Activated B cell treated with CpG ODN at 0.5 μM for 24 hours (primary cell): ENCODE measurements at regions of chr19 and their contacts with region 1.

Region 1: GRCh38 chr19:6767357-6768235 is at the start of gene SH2D3A:
- DNase-seq: peak; percentile 87
- ATAC-seq: peak; percentile 73
- H3K4me3 Mint-ChIP-seq: peak within 1 kb of the TSS; percentile 88
- H3K27ac Mint-ChIP-seq: peak within 1 kb of the TSS; percentile 85
- H3K4me1 Mint-ChIP-seq: peaks cover 46% of the 10 kb centered on the region
- H3K27me3 Mint-ChIP-seq: no peaks in the 10 kb centered on the region
- CTCF ChIP-seq: no peak
- total RNA-seq, gene SH2D3A: 18.7 and 22.6 TPM in 2 replicates

Region 2: GRCh38 chr19:4859697-4860096 is 1907.9 kb before region 1 on chr19:
- CTCF ChIA-PET with region 1: no interaction called
- POLR2A ChIA-PET with region 1: interaction called, 11 read pairs
- intact Hi-C with region 1: no loop called
- DNase-seq: no peak
- ATAC-seq: no peak
- H3K4me3 Mint-ChIP-seq: no peak overlapping the region
- H3K27ac Mint-ChIP-seq: no peak overlapping the region
- H3K4me1 Mint-ChIP-seq: peaks cover 18% of the 10 kb centered on the region
- H3K27me3 Mint-ChIP-seq: no peaks in the 10 kb centered on the region
- CTCF ChIP-seq: no peak

Region 3: GRCh38 chr19:6577476-6578125 is 190.0 kb before region 1 on chr19:
- CTCF ChIA-PET with region 1: no interaction called
- POLR2A ChIA-PET with region 1: interaction called, 10 read pairs
- intact Hi-C with region 1: loop called (anchors 5 kb)
- DNase-seq: peak; percentile 54
- ATAC-seq: peak; percentile 90
- H3K4me3 Mint-ChIP-seq: peak overlapping the region; percentile 68
- H3K27ac Mint-ChIP-seq: no peak overlapping the region
- H3K4me1 Mint-ChIP-seq: peaks cover 6% of the 10 kb centered on the region
- H3K27me3 Mint-ChIP-seq: no peaks in the 10 kb centered on the region
- CTCF ChIP-seq: no peak

Region 4: GRCh38 chr19:6685962-6686627 is 81.5 kb before region 1 on chr19:
- CTCF ChIA-PET with region 1: no interaction called
- POLR2A ChIA-PET with region 1: no interaction called
- intact Hi-C with region 1: no loop called
- DNase-seq: no peak
- ATAC-seq: no peak
- H3K4me3 Mint-ChIP-seq: no peak overlapping the region
- H3K27ac Mint-ChIP-seq: no peak overlapping the region
- H3K4me1 Mint-ChIP-seq: no peaks in the 10 kb centered on the region
- H3K27me3 Mint-ChIP-seq: no peaks in the 10 kb centered on the region
- CTCF ChIP-seq: no peak

Region 5: DNA sequence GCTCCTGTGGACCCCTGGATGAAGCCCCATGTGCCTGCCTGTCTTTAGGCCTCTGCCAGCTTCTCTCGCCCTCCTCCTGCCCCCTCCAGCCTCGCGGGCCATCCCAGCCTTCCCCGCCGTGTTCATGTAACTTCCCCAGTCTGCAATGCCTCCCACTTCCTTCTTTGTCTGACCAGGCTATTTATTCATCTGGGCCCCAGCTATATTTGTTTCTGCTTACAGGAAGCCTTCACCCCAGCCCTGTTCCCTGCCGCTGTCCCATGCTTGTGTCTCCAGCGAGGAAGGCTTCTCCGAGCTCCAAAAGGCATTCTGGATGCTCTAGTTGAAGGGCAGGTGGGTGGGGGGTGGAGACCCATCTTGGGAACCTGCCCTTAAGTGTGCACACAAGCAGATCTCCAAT is 39.2 kb before region 1 on chr19:
- CTCF ChIA-PET with region 1: no interaction called
- POLR2A ChIA-PET with region 1: interaction called, 10 read pairs
- intact Hi-C with region 1: no loop called
- DNase-seq: no peak
- ATAC-seq: peak; percentile 63
- H3K4me3 Mint-ChIP-seq: peak overlapping the region; percentile 2
- H3K27ac Mint-ChIP-seq: peak overlapping the region; percentile 69
- H3K4me1 Mint-ChIP-seq: peaks cover 42% of the 10 kb centered on the region
- H3K27me3 Mint-ChIP-seq: no peaks in the 10 kb centered on the region
- CTCF ChIP-seq: no peak

Region 6: GRCh38 chr19:6753178-6754031 is 14.2 kb before region 1 on chr19:
- CTCF ChIA-PET with region 1: interaction called, 3 read pairs
- POLR2A ChIA-PET with region 1: interaction called, 25 read pairs
- intact Hi-C with region 1: loop called (anchors 1 kb)
- DNase-seq: peak; percentile 91
- ATAC-seq: peak; percentile 93
- H3K4me3 Mint-ChIP-seq: peak overlapping the region; percentile 87
- H3K27ac Mint-ChIP-seq: peak overlapping the region; percentile 82
- H3K4me1 Mint-ChIP-seq: peaks cover 33% of the 10 kb centered on the region
- H3K27me3 Mint-ChIP-seq: no peaks in the 10 kb centered on the region
- CTCF ChIP-seq: no peak

Region 7: GRCh38 chr19:6779206-6779605 is 11.6 kb after region 1 on chr19:
- CTCF ChIA-PET with region 1: no interaction called
- POLR2A ChIA-PET with region 1: interaction called, 11 read pairs
- intact Hi-C with region 1: no loop called
- DNase-seq: no peak
- ATAC-seq: no peak
- H3K4me3 Mint-ChIP-seq: no peak overlapping the region
- H3K27ac Mint-ChIP-seq: peak overlapping the region; percentile 53
- H3K4me1 Mint-ChIP-seq: peaks cover 72% of the 10 kb centered on the region
- H3K27me3 Mint-ChIP-seq: no peaks in the 10 kb centered on the region
- CTCF ChIP-seq: no peak

Region 8: GRCh38 chr19:6801485-6802086 is 34.0 kb after region 1 on chr19:
- CTCF ChIA-PET with region 1: interaction called, 31 read pairs
- POLR2A ChIA-PET with region 1: interaction called, 333 read pairs
- intact Hi-C with region 1: loop called (anchors 1 kb)
- DNase-seq: peak; percentile 89
- ATAC-seq: peak; percentile 71
- H3K4me3 Mint-ChIP-seq: peak overlapping the region; percentile 83
- H3K27ac Mint-ChIP-seq: peak overlapping the region; percentile 94
- H3K4me1 Mint-ChIP-seq: peaks cover 83% of the 10 kb centered on the region
- H3K27me3 Mint-ChIP-seq: no peaks in the 10 kb centered on the region
- CTCF ChIP-seq: no peak